ENCODE measurements at regions of chr7 and their contacts with region 1.

Region 1: GRCh38 chr7:44307301-44307900 is 18.0 kb downstream of the CAMK2B start:
- DNase-seq: peak; percentile 87
- H3K4me3 ChIP-seq: no peak overlapping the region
- H3K27ac ChIP-seq: no peak overlapping the region
- H3K4me1 ChIP-seq: peaks cover 0 to 4% of the 10 kb centered on the region in 2 experiments; a peak in 1 of 4 replicates
- H3K27me3 ChIP-seq: no peaks in the 10 kb centered on the region
- CTCF ChIP-seq: peak; percentile 56
- EP300 ChIP-seq: no peak
- RAD21 ChIP-seq: peak; percentile 89

Region 2: GRCh38 chr7:44218418-44219201 is 88.8 kb before region 1 on chr7:
- CTCF ChIA-PET with region 1: interaction called, 11 read pairs
- POLR2A ChIA-PET with region 1: no interaction called
- DNase-seq: peak; percentile 81
- H3K4me3 ChIP-seq: no peak overlapping the region
- H3K27ac ChIP-seq: peak overlapping the region in 1 of 2 experiments; percentile 77; a peak in 2 of 4 replicates
- H3K4me1 ChIP-seq: peaks cover 0 to 42% of the 10 kb centered on the region in 2 experiments; a peak in 1 of 4 replicates
- H3K27me3 ChIP-seq: no peaks in the 10 kb centered on the region
- CTCF ChIP-seq: no peak
- EP300 ChIP-seq: no peak
- RAD21 ChIP-seq: no peak

Measured in SK-N-SH (cell line).